ENCODE measurements at regions of chr10 and their contacts with region 1.

Region 1: DNA sequence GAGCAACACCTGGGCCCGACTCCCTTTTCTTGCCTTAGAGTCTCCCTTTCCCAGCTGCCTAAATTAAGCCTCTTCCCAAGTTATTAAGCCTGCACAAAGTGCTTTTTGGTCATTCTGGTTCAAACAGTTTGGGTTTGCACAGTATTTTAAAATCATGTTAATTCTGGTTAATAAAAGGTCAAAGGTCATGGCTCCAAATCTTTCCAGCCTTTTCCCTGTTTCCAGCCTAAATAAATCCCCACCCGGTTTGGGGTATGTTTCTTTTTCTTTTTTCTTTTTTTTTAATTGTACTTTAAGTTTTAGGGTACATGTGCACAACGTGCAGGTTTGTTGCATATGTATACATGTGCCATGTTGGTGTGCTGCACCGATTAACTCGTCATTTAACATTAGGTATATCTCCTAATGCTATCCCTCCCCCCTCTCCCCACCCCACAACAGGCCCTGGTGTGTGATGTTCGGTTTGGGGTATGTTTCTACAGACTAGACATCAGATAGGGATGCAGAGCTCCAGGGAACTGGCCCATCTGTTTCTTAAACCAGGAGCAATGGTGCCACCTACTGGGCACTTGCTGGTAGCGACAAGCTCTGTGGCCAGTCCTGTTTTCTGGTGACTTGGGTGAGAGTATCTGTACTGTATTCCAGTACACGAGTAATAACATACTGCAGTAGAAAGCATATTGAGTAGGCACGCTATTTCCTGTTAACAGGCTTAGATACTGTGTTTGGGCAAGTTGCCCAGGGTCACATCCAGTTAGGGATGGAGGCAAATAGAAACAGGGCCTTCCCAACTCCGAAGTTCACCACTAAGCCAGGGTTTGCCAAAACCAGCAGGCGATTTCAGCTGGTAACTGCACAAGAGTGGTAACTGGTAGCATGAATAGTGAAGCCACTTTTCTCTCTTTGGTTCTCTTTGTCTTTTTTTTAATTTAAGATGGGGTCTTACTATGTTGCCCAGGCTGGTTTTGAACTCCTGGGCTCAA is 60.6 kb upstream of the TRIM8 start:
- DNase-seq: peak; percentile 81 to 89 (median 86)
- ATAC-seq: peak; percentile 84 to 95 (median 90)
- H3K4me3 ChIP-seq: no peak overlapping the region
- H3K27ac ChIP-seq: no peak overlapping the region
- H3K4me1 ChIP-seq: peaks cover 0 to 33% (median 11%) of the 10 kb centered on the region in 12 donors
- H3K27me3 ChIP-seq: no peaks in the 10 kb centered on the region
- CTCF ChIP-seq: peak; percentile 79 to 94 (median 88)
- POLR2A ChIP-seq: no peak

Region 2: DNA sequence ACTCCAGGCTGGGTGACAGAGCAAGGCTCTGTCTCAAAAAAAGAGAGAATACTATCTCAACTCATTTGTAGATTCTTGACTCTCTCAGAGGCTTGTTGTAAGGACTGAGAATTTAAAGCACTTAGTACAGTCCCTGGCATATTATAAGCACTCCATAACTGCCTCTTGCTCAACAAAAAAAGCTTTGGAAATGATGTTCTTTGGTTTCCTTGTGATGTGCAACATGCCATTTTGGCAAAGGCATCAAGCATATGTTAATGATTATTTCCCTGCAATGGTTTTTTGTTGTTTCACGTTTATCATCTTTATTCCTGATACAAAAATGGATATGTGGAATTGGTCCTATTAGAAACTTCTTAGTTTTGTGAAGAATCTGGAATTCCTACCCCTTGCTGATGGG is 415.9 kb before region 1 on chr10:
- intact Hi-C with region 1: loop called in 1 of 10 experiments (anchors 10 kb)
- DNase-seq: no peak
- ATAC-seq: no peak
- H3K4me3 ChIP-seq: no peak overlapping the region
- H3K27ac ChIP-seq: no peak overlapping the region
- H3K4me1 ChIP-seq: peaks cover 0 to 12% (median 2%) of the 10 kb centered on the region in 12 donors
- H3K27me3 ChIP-seq: no peaks in the 10 kb centered on the region
- CTCF ChIP-seq: no peak
- POLR2A ChIP-seq: no peak

Region 3: DNA sequence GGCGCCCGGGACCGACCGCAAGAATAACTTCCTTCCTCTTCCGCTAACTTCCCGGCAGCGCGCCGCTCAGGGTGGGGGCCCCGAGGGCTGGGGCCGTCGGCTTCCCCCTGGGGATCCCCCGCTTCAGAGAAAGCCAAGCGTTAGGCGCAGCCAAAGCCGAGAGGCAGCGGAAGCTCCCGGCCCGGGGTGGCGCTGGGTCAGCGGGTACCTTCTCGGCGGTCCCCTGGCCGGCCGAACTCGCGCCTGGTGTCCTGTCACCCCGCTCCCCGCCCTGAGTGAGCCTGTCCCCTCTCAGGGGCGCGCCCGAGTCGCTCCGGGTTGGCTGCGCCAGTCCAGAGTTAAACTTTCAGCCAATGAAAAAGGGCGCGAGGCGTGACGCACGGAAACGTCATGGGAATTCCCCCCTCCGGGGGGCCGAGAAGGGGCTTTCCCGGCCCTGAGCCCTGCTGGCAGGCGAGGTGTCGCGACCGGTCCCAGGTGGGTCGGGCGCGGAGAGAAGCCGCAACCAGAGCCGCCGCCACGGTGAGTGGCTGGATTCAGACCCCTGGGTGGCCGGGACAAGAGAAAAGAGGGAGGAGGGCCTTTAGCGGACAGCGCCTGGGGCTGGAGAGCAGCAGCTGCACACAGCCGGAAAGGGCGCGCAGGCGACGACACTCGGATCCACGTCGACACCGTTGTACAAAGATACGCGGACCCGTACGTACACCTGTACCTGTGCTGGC is 189.5 kb before region 1 on chr10:
- intact Hi-C with region 1: loop called in 7 of 10 experiments (anchors 2 to 10 kb)
- DNase-seq: peak; percentile 96 to 98 (median 97)
- ATAC-seq: peak; percentile 84 to 94 (median 92)
- H3K4me3 ChIP-seq: peak overlapping the region; percentile 50 to 91 (median 75)
- H3K27ac ChIP-seq: peak overlapping the region; percentile 89 to 99 (median 96)
- H3K4me1 ChIP-seq: peaks cover 3 to 42% (median 26%) of the 10 kb centered on the region in 12 donors
- H3K27me3 ChIP-seq: no peaks in the 10 kb centered on the region
- CTCF ChIP-seq: peak in 10 of 12 donors; percentile 1 to 98 (median 94)
- POLR2A ChIP-seq: peak in 1 of 2 donors; percentile 81

Region 4: DNA sequence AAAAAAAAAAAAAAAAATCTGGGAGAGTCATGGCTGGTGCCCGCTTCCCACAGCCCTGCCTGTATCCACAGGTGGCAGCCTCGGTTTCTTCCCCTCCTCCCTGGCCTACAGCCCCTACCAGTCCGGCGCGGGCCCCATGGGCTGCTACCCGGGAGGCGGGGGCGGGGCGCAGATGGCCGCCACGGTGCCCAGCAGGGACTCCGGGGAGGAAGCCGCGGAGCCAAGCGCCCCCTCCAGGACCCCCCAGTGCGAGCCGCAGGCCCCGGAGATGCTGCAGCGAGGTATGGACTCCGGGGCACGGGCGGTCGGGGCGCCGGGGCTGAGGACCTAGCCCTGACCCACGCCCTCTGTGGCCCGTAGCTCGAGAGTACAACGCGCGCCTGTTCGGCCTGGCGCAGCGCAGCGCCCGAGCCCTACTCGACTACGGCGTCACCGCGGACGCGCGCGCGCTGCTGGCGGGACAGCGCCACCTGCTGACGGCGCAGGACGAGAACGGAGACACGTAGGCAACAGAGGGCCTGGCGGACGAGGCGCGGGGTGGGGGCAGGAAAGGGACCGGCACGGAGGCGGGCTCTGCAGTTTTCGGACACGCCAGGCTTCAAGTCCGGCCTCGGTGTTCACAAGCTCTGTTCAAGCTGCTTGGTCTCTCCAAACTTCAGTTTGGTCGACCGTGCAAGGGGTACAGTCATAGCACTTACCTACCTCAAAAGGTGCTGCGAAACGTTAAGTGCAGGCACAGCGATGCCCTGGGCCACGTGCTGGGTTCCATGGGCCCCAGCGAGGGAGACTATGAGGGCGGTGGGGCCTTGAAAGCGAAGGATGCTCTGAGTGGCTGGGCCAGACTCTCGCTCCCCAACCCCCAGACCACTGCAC is 184.3 kb before region 1 on chr10:
- intact Hi-C with region 1: loop called in 7 of 10 experiments (anchors 2 to 10 kb)
- DNase-seq: peak; percentile 87 to 95 (median 92)
- ATAC-seq: peak; percentile 60 to 80 (median 73)
- H3K4me3 ChIP-seq: peak overlapping the region; percentile 18 to 85 (median 70)
- H3K27ac ChIP-seq: peak overlapping the region; percentile 70 to 99 (median 86)
- H3K4me1 ChIP-seq: peaks cover 0 to 44% (median 26%) of the 10 kb centered on the region in 12 donors
- H3K27me3 ChIP-seq: no peaks in the 10 kb centered on the region
- CTCF ChIP-seq: peak; percentile 92 to 99 (median 95)
- POLR2A ChIP-seq: peak in 1 of 2 donors; percentile 46

Region 5: DNA sequence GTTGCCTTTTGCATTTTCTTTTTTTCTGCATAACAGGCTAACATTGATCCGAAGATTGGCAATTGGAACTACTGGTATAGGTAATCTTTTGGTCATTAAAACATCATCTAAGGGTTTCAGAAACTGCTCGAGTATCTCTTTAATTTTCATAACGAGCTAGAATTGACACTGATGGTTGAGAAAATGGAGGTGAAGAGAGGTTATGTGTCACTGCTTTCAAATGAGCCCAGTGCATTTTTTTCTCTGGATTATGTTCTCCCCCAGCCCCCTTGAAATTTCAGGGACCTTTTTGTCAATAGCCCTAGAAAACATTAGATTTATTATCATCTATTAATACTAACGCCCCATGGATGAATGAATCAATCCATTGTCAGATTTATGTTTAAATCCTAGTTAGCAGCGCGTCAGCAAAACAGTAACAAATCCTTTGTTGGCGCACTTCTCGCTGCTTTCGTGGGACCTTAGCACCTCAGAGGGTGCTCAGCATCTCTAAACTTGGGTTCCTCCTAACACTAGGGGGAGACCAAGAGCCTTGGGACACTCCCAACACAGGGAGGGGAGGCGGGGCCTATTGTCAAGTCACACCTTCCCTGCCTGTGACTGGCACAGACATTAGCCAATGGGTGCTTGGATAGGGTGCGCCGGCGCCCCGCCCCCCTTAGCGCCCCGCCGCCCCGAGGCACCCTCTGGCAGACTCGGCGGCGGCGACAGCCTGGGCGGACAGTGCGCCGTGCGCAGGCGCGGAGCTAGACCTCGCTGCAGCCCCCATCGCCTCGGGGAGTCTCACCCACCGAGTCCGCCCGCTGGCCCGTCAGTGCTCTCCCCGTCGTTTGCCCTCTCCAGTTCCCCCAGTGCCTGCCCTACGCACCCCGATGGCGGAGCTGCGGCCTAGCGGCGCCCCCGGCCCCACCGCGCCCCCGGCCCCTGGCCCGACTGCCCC is 80.2 kb before region 1 on chr10 and contains the start of gene SUFU:
- intact Hi-C with region 1: loop called (anchors 1 to 5 kb)
- DNase-seq: peak; percentile 98 to 99 (median 98)
- ATAC-seq: peak; percentile 77 to 90 (median 82)
- H3K4me3 ChIP-seq: peak within 1 kb of the TSS; percentile 70 to 97 (median 84)
- H3K27ac ChIP-seq: peak within 1 kb of the TSS; percentile 51 to 98 (median 88)
- H3K4me1 ChIP-seq: peaks cover 0 to 70% (median 43%) of the 10 kb centered on the region in 12 donors
- H3K27me3 ChIP-seq: no peaks in the 10 kb centered on the region
- CTCF ChIP-seq: peak; percentile 85 to 98 (median 95)
- POLR2A ChIP-seq: peak in 1 of 2 donors; percentile 85
- total RNA-seq, gene SUFU: 5.8 to 12.7 (median 7.7) TPM

Region 6: GRCh38 chr10:102509387-102509786 is 74.3 kb before region 1 on chr10:
- intact Hi-C with region 1: loop called in 6 of 10 experiments (anchors 1 to 5 kb)
- DNase-seq: no peak
- ATAC-seq: no peak
- H3K4me3 ChIP-seq: no peak overlapping the region
- H3K27ac ChIP-seq: peak overlapping the region in 1 of 12 donors; percentile 48
- H3K4me1 ChIP-seq: peaks cover 0 to 53% (median 21%) of the 10 kb centered on the region in 12 donors
- H3K27me3 ChIP-seq: no peaks in the 10 kb centered on the region
- CTCF ChIP-seq: no peak
- POLR2A ChIP-seq: no peak

Measured in heart left ventricle (tissue), 16 donors.